ENCODE measurements at regions of chr12 and their contacts with region 1.

Region 1: GRCh38 chr12:120469450-120470149 is at the start of gene SRSF9:
- DNase-seq: peak; percentile 95 to 97
- H3K4me3 ChIP-seq: peak within 1 kb of the TSS; percentile 80
- H3K4me3 Mint-ChIP-seq: peak within 1 kb of the TSS; percentile 85
- H3K27ac Mint-ChIP-seq: peak within 1 kb of the TSS; percentile 79
- H3K4me1 ChIP-seq: peaks cover 5% of the 10 kb centered on the region
- H3K4me1 Mint-ChIP-seq: peaks cover 8% of the 10 kb centered on the region
- H3K27me3 ChIP-seq: no peaks in the 10 kb centered on the region
- H3K27me3 Mint-ChIP-seq: no peaks in the 10 kb centered on the region
- CTCF ChIP-seq: peak; percentile 84 to 93
- total RNA-seq, gene SRSF9: 240 and 244 TPM in 2 replicates

Region 2: GRCh38 chr12:120356567-120357030 is 113.0 kb before region 1 on chr12:
- CTCF ChIA-PET with region 1: interaction called, 3 read pairs
- POLR2A ChIA-PET with region 1: no interaction called
- intact Hi-C with region 1: loop called (anchors 2 kb)
- DNase-seq: peak; percentile 84 to 86
- H3K4me3 ChIP-seq: no peak overlapping the region
- H3K4me3 Mint-ChIP-seq: no peak overlapping the region
- H3K27ac Mint-ChIP-seq: no peak overlapping the region
- H3K4me1 ChIP-seq: no peaks in the 10 kb centered on the region
- H3K4me1 Mint-ChIP-seq: no peaks in the 10 kb centered on the region
- H3K27me3 ChIP-seq: no peaks in the 10 kb centered on the region
- H3K27me3 Mint-ChIP-seq: no peaks in the 10 kb centered on the region
- CTCF ChIP-seq: peak; percentile 78 to 84

Region 3: GRCh38 chr12:120445911-120446843 is 23.4 kb before region 1 on chr12 and contains the starts of genes GATC and TRIAP1:
- CTCF ChIA-PET with region 1: interaction called, 3 read pairs
- POLR2A ChIA-PET with region 1: no interaction called
- intact Hi-C with region 1: loop called (anchors 2 kb)
- DNase-seq: peak; percentile 87 to 90
- H3K4me3 ChIP-seq: peak within 1 kb of the TSS; percentile 67
- H3K4me3 Mint-ChIP-seq: peak within 1 kb of the TSS; percentile 96
- H3K27ac Mint-ChIP-seq: peak within 1 kb of the TSS; percentile 98
- H3K4me1 ChIP-seq: 0 out of 2 replicates have a peak, but pooled peaks cover 3% of the 10 kb centered on the region
- H3K4me1 Mint-ChIP-seq: peaks cover 8% of the 10 kb centered on the region
- H3K27me3 ChIP-seq: no peaks in the 10 kb centered on the region
- H3K27me3 Mint-ChIP-seq: no peaks in the 10 kb centered on the region
- CTCF ChIP-seq: no peak
- total RNA-seq, gene GATC: 30.9 and 33.2 TPM in 2 replicates
- total RNA-seq, gene TRIAP1: 34.5 and 36.7 TPM in 2 replicates

Region 4: DNA sequence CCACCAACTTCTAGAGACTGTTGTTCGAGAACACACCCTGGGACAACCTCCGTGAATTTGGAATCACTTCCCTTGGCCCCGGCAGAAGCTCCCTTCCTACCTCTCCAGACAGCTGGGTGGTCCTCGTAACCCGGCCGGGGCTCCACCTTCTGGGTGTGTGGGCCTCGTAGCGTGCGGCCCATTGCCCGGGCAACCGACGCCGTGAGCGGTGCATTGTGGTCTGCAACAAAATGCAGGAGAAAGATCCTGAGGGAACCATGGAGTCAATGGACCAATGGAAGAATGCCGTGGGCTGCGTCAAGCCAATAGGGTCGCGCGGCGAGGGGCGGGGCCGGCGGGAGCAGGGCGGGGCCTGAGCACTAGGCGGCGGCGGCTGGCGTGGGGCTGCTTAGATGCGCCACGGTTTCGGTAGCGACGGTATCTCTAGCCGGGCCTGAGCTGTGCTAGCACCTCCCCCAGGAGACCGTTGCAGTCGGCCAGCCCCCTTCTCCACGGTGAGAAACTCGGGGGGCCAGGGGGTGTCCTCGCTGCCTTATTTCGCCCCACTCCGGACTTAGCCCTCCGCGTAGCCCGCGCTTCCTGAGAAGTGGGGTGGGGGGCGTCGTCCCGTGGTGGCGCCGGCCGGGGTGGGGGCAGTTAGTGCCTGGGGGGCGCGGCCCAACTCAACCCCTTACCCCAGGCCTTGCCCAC is 26.3 kb after region 1 on chr12 and contains the start of gene DYNLL1:
- CTCF ChIA-PET with region 1: interaction called, 4 read pairs
- POLR2A ChIA-PET with region 1: interaction called, 3 read pairs
- intact Hi-C with region 1: loop called (anchors 1 kb)
- DNase-seq: peak; percentile 96 to 98
- H3K4me3 ChIP-seq: peak within 1 kb of the TSS; percentile 80
- H3K4me3 Mint-ChIP-seq: peak within 1 kb of the TSS; percentile 96
- H3K27ac Mint-ChIP-seq: peak within 1 kb of the TSS; percentile 80
- H3K4me1 ChIP-seq: peaks cover 17% of the 10 kb centered on the region
- H3K4me1 Mint-ChIP-seq: peaks cover 19% of the 10 kb centered on the region
- H3K27me3 ChIP-seq: no peaks in the 10 kb centered on the region
- H3K27me3 Mint-ChIP-seq: no peaks in the 10 kb centered on the region
- CTCF ChIP-seq: no peak
- total RNA-seq, gene DYNLL1: 323 and 324 TPM in 2 replicates

Region 5: DNA sequence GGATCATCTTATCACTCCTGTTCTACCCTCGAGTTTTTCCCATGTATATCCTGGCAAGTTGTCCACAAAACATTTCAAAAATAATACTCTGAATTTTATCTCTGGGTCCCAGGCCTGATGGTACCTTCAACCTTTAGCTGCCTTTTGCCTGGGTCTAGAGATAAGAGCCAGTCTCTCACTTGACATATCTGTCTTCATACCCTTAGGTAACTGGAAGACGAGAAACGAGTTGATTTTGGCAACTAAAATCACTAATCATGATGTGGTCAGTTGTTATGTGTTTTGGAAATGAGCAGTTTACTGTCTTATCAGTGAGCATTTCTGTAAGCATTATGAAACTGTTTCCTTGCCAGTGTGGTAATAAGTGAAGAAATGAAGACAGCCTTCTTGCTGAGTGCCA is 70.8 kb after region 1 on chr12:
- CTCF ChIA-PET with region 1: no interaction called
- POLR2A ChIA-PET with region 1: no interaction called
- intact Hi-C with region 1: no loop called
- DNase-seq: no peak
- H3K4me3 ChIP-seq: no peak overlapping the region
- H3K4me3 Mint-ChIP-seq: no peak overlapping the region
- H3K27ac Mint-ChIP-seq: no peak overlapping the region
- H3K4me1 ChIP-seq: peaks cover 33% of the 10 kb centered on the region
- H3K4me1 Mint-ChIP-seq: peaks cover 7% of the 10 kb centered on the region
- H3K27me3 ChIP-seq: no peaks in the 10 kb centered on the region
- H3K27me3 Mint-ChIP-seq: no peaks in the 10 kb centered on the region
- CTCF ChIP-seq: no peak

Region 6: DNA sequence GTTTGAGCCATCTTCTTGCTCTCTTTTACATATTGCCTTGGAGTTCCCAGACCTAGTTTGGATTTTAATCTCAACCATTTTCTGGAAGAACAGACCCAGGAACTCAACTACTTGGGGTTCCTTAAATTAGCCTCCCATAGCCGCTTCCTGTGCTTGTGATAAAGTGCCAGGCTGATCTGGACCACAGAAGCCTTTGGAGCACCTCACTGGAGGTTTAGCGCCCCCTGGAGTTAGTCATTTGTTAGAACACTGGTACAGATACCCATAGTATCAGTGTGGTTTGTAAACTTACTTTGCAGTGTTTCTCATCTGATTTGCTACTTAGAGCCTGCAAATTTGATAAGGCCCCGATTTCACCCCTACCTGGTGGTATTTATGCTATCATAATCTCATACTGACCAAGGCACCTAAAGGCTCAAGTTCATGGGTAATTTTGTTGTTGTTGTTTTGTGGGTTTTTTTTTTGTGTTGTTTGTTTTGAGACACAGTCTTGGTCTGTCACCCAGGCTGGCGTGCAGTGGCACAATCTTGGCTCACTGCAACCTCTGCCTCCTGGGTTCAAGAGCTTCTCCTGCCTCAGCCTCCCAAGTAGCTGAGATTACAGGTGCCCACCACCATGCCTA is 244.4 kb after region 1 on chr12:
- CTCF ChIA-PET with region 1: no interaction called
- POLR2A ChIA-PET with region 1: no interaction called
- intact Hi-C with region 1: no loop called
- DNase-seq: peak; percentile 76 to 84
- H3K4me3 ChIP-seq: no peak overlapping the region
- H3K4me3 Mint-ChIP-seq: no peak overlapping the region
- H3K27ac Mint-ChIP-seq: no peak overlapping the region
- H3K4me1 ChIP-seq: peaks cover 15% of the 10 kb centered on the region
- H3K4me1 Mint-ChIP-seq: peaks cover 14% of the 10 kb centered on the region
- H3K27me3 ChIP-seq: no peaks in the 10 kb centered on the region
- H3K27me3 Mint-ChIP-seq: no peaks in the 10 kb centered on the region
- CTCF ChIP-seq: peak; percentile 70 to 90

Measured in Caco-2 (cell line).